Common myeloid progenitor, CD34-positive (primary cell): ENCODE measurements at regions of chr12 and their contacts with region 1.

Region 1: DNA sequence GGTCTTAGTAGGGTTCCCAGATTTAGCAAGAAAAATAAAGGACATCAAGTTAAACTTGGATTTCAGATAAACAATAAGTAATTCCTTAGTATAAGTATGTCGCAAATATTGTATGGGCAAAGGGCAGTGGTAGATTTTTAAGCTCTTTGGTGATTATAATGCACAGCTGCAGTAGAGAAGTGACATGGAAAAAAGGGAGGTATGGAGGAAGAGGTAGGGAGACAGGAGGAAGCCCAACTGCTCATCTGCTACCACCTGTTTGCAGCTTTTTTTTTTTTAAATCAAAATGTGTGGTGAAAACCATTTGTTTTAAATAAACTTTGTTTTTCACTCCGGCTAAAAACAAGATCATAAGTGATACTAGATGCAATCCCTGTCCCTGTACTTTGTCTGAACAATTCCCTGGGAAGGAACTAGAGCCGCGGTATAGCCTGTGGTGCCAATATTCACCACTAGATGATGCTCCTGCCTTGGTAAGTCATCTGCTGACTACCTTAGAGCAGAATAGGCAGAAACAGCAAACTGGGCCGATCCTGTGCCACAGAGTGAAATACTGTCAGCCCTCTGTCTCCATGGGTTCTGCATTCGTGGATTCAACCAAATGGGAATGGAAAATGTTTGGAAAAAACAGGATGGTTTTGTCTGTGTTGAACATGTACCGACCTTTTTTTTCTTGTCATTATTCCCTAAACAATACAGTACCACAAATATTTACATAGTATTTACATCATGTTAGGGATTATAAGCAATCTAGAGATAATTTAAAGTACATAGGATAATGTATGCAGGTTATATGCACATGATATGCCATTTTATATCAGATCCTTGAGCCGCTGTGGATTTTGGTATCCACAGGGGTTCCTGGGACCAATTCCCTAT is 62.4 kb upstream of the PLBD1 start:
- DNase-seq: peak; percentile 69 to 78 (median 70)
- H3K4me3 ChIP-seq: no peak overlapping the region
- H3K27ac ChIP-seq: no peak overlapping the region
- H3K4me1 ChIP-seq: no peaks in the 10 kb centered on the region
- H3K27me3 ChIP-seq: peaks cover 0 to 18% (median 6%) of the 10 kb centered on the region in 5 experiments

Region 2: DNA sequence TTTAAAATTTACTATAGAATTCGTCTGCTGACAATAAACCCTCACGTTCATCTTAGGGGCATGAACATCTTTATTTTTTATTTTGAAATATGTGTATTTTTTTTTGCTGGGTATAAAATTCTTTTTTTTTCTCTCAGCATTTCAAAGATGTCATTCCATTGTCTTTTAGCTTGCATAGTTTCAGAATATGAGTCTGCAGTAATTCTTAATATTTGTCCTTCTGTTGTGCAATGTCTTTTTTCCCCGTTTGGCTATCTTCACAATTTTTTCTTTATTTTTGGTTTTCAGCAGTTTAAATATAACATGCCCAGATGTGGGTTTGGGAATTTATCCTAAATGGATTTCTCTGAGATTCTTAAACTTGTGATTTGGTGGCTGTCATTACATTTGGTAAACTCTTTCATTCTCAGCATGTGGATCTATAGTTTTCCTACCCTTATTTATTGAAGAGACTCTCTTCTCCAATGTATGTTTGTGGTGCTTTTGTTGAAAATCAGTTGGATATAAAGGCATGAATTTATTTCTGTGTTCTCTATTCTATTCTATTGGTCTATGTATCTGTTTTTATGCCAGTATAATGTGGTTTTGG is 24.6 kb before region 1 on chr12:
- CTCF ChIA-PET with region 1: no interaction called
- POLR2A ChIA-PET with region 1: no interaction called
- DNase-seq: peak in 2 of 3 donors; percentile 19 to 36
- H3K4me3 ChIP-seq: no peak overlapping the region
- H3K27ac ChIP-seq: no peak overlapping the region
- H3K4me1 ChIP-seq: no peaks in the 10 kb centered on the region
- H3K27me3 ChIP-seq: no peaks in the 10 kb centered on the region

Region 3: GRCh38 chr12:14664510-14664909 is 34.4 kb after region 1 on chr12:
- CTCF ChIA-PET with region 1: interaction called, 96 read pairs
- POLR2A ChIA-PET with region 1: no interaction called
- DNase-seq: peak; percentile 73 to 86 (median 84)
- H3K4me3 ChIP-seq: no peak overlapping the region
- H3K27ac ChIP-seq: no peak overlapping the region
- H3K4me1 ChIP-seq: peaks cover 0 to 2% (median 0%) of the 10 kb centered on the region in 4 experiments
- H3K27me3 ChIP-seq: peaks cover 0 to 15% (median 3%) of the 10 kb centered on the region in 5 experiments

Region 4: GRCh38 chr12:14691560-14691959 is 61.5 kb after region 1 on chr12:
- CTCF ChIA-PET with region 1: interaction called, 10 read pairs
- POLR2A ChIA-PET with region 1: no interaction called
- DNase-seq: peak; percentile 88 to 95 (median 94)
- H3K4me3 ChIP-seq: no peak overlapping the region
- H3K27ac ChIP-seq: no peak overlapping the region
- H3K4me1 ChIP-seq: peaks cover 0 to 8% (median 3%) of the 10 kb centered on the region in 4 experiments
- H3K27me3 ChIP-seq: no peaks in the 10 kb centered on the region

Region 5: DNA sequence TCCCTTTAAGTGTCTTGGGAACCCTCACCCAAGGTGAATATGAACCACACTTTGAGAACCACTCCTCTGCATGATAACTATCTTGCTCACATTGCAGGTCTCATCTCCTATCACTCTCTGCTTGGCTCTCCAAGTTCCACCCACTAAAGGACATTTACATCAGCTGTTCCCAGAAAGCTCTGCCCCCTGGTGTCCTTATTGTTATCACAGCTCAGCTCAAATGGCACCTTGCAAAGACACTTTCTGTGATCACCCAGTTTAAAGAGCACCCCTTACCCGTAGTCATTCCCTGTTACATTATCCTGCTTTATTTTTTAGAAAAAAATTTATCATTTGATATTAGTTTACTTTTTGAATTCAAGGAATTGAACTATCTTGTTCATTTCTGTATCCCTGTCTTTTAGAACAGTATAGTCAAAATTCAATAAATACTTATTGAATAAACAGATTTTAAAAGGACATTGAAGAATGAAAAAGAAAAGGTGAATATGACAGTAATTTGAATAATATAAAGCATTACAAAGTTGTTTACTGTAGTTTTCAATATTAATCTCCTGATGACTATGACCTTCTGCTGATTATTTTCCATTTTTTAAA is 86.9 kb after region 1 on chr12:
- CTCF ChIA-PET with region 1: interaction called, 18 read pairs
- POLR2A ChIA-PET with region 1: no interaction called
- DNase-seq: peak; percentile 59 to 72 (median 68)
- H3K4me3 ChIP-seq: no peak overlapping the region
- H3K27ac ChIP-seq: no peak overlapping the region
- H3K4me1 ChIP-seq: peaks cover 0 to 5% (median 0%) of the 10 kb centered on the region in 4 experiments
- H3K27me3 ChIP-seq: peaks cover 0 to 1% (median 0%) of the 10 kb centered on the region in 5 experiments

Region 6: DNA sequence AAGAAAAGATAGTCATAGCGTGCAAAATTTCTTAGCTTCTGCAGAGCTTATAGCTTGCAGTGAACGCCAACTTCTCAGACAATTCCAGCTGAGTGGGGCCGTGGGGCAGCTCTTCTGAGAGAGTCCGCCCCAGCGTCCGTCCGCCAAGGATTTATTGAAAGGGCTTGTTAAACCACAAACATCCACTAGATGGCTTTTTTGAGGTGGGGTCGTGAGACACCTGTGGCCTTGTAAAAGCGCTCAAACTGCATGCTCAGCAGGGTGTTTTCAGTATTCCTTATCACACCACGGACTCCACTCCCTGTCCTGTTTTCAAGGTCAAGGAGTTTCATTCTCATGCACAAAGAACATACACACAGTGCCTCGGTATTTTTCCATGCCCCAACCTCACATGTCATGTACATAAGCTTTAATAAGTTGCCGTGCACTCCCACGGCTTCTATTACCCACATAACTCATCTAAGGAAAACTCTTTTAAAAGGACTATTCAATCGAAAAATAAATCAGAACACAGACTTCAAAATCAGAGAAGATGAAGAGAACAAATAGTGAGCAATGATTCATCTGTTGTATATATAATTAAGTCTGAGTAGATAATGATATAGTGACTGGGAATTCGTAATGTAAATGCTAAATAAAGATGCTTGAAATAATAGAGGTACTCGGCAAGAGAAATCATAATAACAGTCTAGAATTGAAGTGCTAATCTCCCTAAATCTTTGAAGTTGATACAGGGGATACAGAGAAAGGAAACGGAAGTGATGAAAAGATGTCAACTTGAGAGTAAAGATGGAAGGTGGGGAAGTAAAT is 126.5 kb after region 1 on chr12:
- CTCF ChIA-PET with region 1: no interaction called
- POLR2A ChIA-PET with region 1: no interaction called
- DNase-seq: peak; percentile 10 to 29 (median 13)
- H3K4me3 ChIP-seq: peak overlapping the region in 1 of 7 experiments; percentile 28
- H3K27ac ChIP-seq: no peak overlapping the region
- H3K4me1 ChIP-seq: no peaks in the 10 kb centered on the region
- H3K27me3 ChIP-seq: no peaks in the 10 kb centered on the region